ENCODE measurements at regions of chr18 and their contacts with region 1.

Region 1: GRCh38 chr18:47929681-47930198 is 719 bp downstream of the SMAD2 start:
- DNase-seq: peak in 1 of 2 donors; percentile 66
- ATAC-seq: peak in 2 of 3 donors; percentile 11 to 18
- H3K4me3 ChIP-seq: peak overlapping the region; percentile 83
- H3K4me3 Mint-ChIP-seq: peak overlapping the region; percentile 94
- H3K27ac ChIP-seq: peak overlapping the region; percentile 87
- H3K27ac Mint-ChIP-seq: peak overlapping the region; percentile 87 to 94
- H3K4me1 ChIP-seq: peaks cover 6% of the 10 kb centered on the region
- H3K4me1 Mint-ChIP-seq: peaks cover 57 to 60% of the 10 kb centered on the region in 2 donors
- H3K27me3 ChIP-seq: no peaks in the 10 kb centered on the region
- H3K27me3 Mint-ChIP-seq: peaks cover 0 to 3% of the 10 kb centered on the region in 2 donors
- CTCF ChIP-seq: no peak

Region 2: DNA sequence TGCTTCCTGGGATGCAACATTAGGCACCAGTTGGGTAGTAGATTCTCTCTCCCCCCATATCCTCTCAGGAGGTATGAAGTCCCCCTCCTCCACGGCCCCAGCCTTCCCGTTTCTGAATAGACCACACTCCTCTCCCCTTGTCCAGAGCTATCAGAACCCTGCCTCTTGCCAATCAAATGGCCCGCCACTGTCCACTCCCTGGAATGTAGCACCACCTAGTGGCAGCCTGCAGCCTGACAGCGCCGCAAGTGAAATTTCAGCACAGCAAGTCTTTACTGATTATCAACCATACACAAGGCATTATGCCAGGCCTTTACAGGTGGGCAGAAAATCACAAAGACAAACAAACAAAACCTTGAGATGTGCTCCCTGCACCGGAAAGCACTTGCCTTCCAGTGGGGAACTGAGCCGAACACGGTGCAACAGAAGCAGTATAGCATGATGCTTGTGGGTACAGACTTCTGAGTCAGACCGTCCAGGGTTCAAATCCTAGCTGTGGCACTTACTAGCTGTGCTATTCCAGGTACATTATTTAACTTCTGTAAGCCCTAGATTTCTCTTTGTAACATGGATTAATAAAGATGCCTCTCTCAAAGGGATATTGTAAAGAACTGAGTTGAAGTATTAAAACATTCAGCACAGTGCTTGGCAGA is 173.2 kb before region 1 on chr18:
- intact Hi-C with region 1: no loop called
- DNase-seq: peak; percentile 44 to 65
- ATAC-seq: peak; percentile 65 to 73 (median 68)
- H3K4me3 ChIP-seq: no peak overlapping the region
- H3K4me3 Mint-ChIP-seq: no peak overlapping the region
- H3K27ac ChIP-seq: no peak overlapping the region
- H3K27ac Mint-ChIP-seq: no peak overlapping the region
- H3K4me1 ChIP-seq: peaks cover 4% of the 10 kb centered on the region
- H3K4me1 Mint-ChIP-seq: peaks cover 4 to 11% of the 10 kb centered on the region in 2 donors
- H3K27me3 ChIP-seq: no peaks in the 10 kb centered on the region
- H3K27me3 Mint-ChIP-seq: peaks cover 28 to 31% of the 10 kb centered on the region in 2 donors
- CTCF ChIP-seq: peak; percentile 80

Region 3: DNA sequence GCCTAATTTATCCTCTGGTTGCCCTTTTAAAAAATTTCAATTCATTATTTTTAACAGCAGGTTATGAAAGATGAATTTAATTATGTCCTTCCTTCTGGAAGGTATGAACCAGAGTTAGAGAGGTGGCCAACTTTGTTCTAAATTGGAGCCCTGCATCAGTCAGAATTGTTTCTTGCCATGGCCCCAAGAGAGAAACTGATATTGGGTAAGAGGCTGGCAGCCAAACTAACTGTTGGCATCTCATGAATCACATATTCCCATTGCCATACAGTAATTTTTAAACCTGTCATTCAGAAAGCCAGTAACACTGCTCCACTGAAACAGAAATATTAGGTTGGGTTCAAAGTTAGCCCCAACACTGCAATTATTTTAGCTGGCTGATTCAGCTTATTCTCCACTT is 66.7 kb before region 1 on chr18:
- intact Hi-C with region 1: loop called (anchors 10 kb)
- DNase-seq: no peak
- ATAC-seq: no peak
- H3K4me3 ChIP-seq: no peak overlapping the region
- H3K4me3 Mint-ChIP-seq: no peak overlapping the region
- H3K27ac ChIP-seq: no peak overlapping the region
- H3K27ac Mint-ChIP-seq: peak overlapping the region; percentile 3 to 17
- H3K4me1 ChIP-seq: no peaks in the 10 kb centered on the region
- H3K4me1 Mint-ChIP-seq: peaks cover 15 to 22% of the 10 kb centered on the region in 2 donors
- H3K27me3 ChIP-seq: no peaks in the 10 kb centered on the region
- H3K27me3 Mint-ChIP-seq: no peaks in the 10 kb centered on the region
- CTCF ChIP-seq: no peak

Region 4: DNA sequence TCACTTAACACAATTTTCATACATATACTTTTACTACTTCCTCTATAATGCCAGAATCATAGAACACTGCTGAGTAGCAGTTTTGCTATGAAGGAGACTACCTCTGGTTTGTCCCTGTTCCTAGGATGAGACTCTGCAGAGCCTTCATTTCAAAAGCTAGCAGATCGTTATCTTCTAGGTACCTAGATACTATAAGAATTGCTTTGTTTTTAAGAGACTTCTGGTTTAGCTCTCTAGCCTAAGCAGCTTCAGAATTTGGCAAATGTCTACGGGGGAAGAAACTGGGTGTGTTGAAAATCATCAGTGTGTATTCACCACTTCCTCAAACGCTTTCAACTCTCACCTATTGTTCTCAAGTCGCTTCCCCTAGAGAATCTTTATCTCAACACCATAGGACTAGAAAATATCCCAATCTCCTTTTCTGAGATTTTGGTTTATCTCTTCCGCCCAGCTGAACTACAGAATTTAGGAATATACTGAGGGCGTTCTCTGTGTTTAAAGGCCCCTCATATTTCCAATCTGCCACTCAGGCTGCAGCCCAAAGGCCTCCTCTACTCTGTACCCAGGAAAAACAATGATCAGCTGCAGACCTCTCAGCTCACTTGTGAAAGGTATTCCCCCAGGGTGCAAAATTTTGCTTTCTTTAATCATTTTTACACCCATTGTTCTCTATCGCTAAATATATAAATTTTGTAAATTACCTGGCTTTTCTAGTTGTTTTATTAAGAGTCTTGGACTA is 27.9 kb before region 1 on chr18:
- intact Hi-C with region 1: loop called (anchors 1 kb)
- DNase-seq: peak in 1 of 2 donors; percentile 65
- ATAC-seq: peak; percentile 84 to 92 (median 88)
- H3K4me3 ChIP-seq: no peak overlapping the region
- H3K4me3 Mint-ChIP-seq: peak overlapping the region; percentile 82
- H3K27ac ChIP-seq: peak overlapping the region; percentile 68
- H3K27ac Mint-ChIP-seq: peak overlapping the region; percentile 88 to 98
- H3K4me1 ChIP-seq: peaks cover 12% of the 10 kb centered on the region
- H3K4me1 Mint-ChIP-seq: peaks cover 72 to 94% of the 10 kb centered on the region in 2 donors
- H3K27me3 ChIP-seq: no peaks in the 10 kb centered on the region
- H3K27me3 Mint-ChIP-seq: no peaks in the 10 kb centered on the region
- CTCF ChIP-seq: no peak

Measured in natural killer cell (primary cell).